K562 (cell line): ENCODE measurements at regions of chr17 and their contacts with region 1.

Region 1: DNA sequence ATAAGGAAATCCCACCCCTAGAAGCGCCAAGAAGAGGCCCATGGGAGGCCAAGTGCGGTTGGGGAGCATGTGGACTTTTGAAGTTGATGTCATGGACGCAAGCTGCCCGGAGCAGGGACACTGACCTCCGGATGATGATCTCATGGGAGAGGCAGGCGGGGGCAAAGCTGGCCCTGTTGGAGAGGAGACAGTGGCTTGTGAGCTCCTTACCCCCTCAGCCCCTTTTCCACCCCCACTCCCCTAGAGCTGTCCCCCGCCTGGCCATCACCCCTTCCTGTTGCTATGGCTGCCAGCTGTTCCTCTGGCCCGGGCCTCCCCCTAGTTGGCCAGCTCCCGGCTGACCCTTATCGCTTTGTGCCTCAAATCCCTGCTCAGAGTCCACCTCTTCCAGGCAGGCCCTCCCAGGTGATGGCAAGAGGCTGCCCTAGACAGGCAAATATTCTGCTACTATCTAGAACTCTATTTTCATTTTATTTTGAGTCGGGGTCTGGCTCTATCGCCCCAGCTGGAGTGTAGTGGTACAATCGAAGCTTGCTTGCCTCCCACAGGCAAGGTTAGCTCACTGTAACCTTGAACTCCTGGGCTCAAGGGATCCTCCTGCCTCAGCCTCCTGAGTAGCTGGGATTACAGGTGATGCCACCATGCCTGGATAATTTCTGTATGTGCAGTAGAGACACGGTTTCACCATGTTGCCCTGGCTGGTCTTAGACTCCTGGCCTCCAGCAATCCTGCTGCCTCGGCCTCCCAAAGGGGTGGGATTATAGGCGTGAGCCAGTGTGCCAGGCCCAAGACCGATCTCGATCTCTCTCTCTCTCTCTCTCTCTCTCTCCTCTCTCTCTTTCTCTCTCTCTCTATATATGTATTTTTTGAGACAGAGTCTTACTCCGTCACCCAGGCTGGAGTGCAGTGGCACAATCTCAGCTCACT is 6.6 kb downstream of the NOTUM start:
- DNase-seq: no peak
- ATAC-seq: no peak
- H3K4me3 ChIP-seq: no peak overlapping the region
- H3K27ac ChIP-seq: no peak overlapping the region
- H3K4me1 ChIP-seq: peaks cover 7 to 48% of the 10 kb centered on the region in 2 experiments; a peak in 4 of 5 replicates
- H3K27me3 ChIP-seq: no peaks in the 10 kb centered on the region
- CTCF ChIP-seq: no peak
- EP300 ChIP-seq: no peak
- POLR2A ChIP-seq: no peak; the same call in 1 of the 2 replicates
- RAD21 ChIP-seq: no peak

Region 2: DNA sequence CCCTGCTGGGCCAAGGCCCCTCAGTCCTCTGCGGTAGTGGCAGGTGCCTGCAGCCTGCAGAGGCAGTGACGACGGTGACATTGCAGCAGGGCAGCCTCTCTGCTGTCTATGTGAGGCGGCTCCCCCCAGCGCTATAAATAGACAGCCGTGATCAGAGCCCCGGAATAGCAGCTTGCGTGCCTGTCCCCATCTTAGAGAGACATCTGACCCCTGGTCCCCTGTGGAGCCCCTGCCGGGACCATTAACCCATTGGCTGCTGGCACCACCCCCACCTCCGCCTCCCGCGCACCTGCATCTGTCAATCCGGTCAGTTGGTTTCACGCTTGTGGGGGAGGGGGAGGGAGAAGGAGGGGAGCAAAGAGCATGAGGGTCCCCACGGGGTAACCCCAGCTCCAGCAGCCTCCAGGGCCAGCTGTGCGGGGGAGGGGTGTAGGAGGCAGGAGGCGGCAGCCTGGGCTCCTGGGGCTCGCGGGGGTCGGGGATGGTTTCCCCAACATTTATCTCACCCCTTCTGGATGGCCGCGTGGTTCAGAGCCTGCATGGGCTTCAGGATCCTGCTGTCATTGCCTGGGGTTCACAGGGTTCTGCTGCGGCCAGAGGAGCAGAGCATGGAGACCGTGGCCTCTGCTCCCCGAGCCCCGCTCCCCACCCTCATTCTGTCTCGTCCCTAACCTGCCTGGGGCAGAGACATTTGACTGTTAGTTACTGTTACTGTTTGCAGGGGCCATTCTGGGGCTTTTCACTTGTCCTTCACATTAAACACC is 12.4 kb before region 1 on chr17:
- CTCF ChIA-PET with region 1: no interaction called
- POLR2A ChIA-PET with region 1: interaction called, 12 read pairs
- in situ Hi-C with region 1: no loop called
- intact Hi-C with region 1: no loop called
- DNase-seq: no peak
- ATAC-seq: no peak
- H3K4me3 ChIP-seq: no peak overlapping the region
- H3K27ac ChIP-seq: no peak overlapping the region
- H3K4me1 ChIP-seq: peaks cover 0 to 48% of the 10 kb centered on the region in 2 experiments; a peak in 3 of 5 replicates
- H3K27me3 ChIP-seq: no peaks in the 10 kb centered on the region
- CTCF ChIP-seq: no peak
- EP300 ChIP-seq: no peak
- POLR2A ChIP-seq: no peak
- RAD21 ChIP-seq: no peak

Region 3: DNA sequence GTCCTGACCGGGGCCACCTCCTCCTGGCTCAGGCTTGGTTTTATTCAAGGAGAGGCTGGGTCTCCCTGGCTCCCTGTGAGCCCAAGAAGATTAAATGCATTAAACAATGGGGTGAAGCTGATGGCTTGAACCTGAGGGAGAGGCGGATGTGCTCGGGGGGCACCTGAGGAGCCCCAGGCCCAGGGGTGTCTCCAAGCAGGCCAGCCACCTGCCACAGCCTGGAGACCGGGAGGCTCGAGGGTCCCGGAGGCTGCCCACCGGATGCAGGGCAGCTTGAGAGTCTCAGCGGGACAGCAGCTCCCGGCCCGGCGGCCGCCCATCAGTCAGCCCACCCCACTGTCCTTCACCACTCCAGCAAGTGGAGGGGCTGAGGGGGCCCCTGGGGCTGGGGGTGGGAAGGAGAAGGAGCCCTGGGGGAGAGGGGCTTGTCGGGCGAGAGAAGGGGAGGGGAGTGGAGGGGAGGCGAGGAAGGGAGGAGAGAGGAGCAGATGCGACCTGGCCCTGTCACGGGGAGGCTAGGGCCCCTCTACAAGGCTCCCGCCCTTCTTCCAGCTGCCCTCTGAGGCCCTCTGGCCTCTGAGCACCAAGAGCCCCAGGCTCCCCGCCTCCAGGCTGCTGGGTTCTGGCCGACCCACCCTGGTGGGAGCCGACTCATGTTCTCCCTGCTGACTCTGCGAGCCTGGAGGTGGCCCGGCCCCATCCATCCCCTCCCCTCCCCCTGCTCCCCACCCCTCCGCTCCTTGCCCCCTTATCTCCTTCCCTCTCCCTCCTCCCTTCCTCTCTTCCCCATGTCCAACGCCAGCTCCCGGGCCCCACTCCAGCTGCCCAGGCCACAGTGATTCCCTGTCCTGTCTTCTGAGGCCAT is 349.8 kb after region 1 on chr17:
- CTCF ChIA-PET with region 1: no interaction called
- POLR2A ChIA-PET with region 1: no interaction called
- in situ Hi-C with region 1: no loop called
- intact Hi-C with region 1: no loop called
- DNase-seq: peak; percentile 50 to 77 (median 64)
- ATAC-seq: peak; percentile 47
- H3K4me3 ChIP-seq: no peak overlapping the region
- H3K27ac ChIP-seq: no peak overlapping the region
- H3K4me1 ChIP-seq: peaks cover 37 to 67% of the 10 kb centered on the region in 2 experiments
- H3K27me3 ChIP-seq: no peaks in the 10 kb centered on the region
- CTCF ChIP-seq: no peak
- EP300 ChIP-seq: no peak
- POLR2A ChIP-seq: no peak
- RAD21 ChIP-seq: no peak